PC-3 (cell line): ENCODE measurements at regions of chr1 and their contacts with region 1.

Region 1: GRCh38 chr1:2494323-2494693 is 18.2 kb downstream of the PLCH2 start:
- DNase-seq: peak; percentile 99
- ATAC-seq: peak; percentile 83
- H3K4me3 ChIP-seq: peak overlapping the region; percentile 8; the same call in 1 of the 2 replicates
- H3K27ac ChIP-seq: peak overlapping the region; percentile 66
- H3K4me1 ChIP-seq: peaks cover 22% of the 10 kb centered on the region
- H3K27me3 ChIP-seq: no peaks in the 10 kb centered on the region
- CTCF ChIP-seq: no peak

Region 2: GRCh38 chr1:2441746-2442145 is 52.6 kb before region 1 on chr1:
- CTCF ChIA-PET with region 1: no interaction called
- POLR2A ChIA-PET with region 1: interaction called, 10 read pairs
- intact Hi-C with region 1: no loop called
- DNase-seq: no peak
- ATAC-seq: peak; percentile 19
- H3K4me3 ChIP-seq: no peak overlapping the region
- H3K27ac ChIP-seq: no peak overlapping the region
- H3K4me1 ChIP-seq: no peaks in the 10 kb centered on the region
- H3K27me3 ChIP-seq: peaks cover 18% of the 10 kb centered on the region
- CTCF ChIP-seq: no peak

Region 3: GRCh38 chr1:2451744-2452143 is 42.6 kb before region 1 on chr1:
- CTCF ChIA-PET with region 1: no interaction called
- POLR2A ChIA-PET with region 1: no interaction called
- intact Hi-C with region 1: loop called (anchors 1 kb)
- DNase-seq: peak; percentile 99
- ATAC-seq: peak; percentile 83
- H3K4me3 ChIP-seq: peak overlapping the region; percentile 59
- H3K27ac ChIP-seq: peak overlapping the region; percentile 96
- H3K4me1 ChIP-seq: peaks cover 59% of the 10 kb centered on the region
- H3K27me3 ChIP-seq: no peaks in the 10 kb centered on the region
- CTCF ChIP-seq: no peak

Region 4: GRCh38 chr1:2534687-2535441 is 40.6 kb after region 1 on chr1:
- CTCF ChIA-PET with region 1: no interaction called
- POLR2A ChIA-PET with region 1: no interaction called
- intact Hi-C with region 1: no loop called
- DNase-seq: peak; percentile 97
- ATAC-seq: peak; percentile 77
- H3K4me3 ChIP-seq: peak overlapping the region; percentile 5; the same call in 1 of the 2 replicates
- H3K27ac ChIP-seq: peak overlapping the region; percentile 21
- H3K4me1 ChIP-seq: peaks cover 45% of the 10 kb centered on the region
- H3K27me3 ChIP-seq: no peaks in the 10 kb centered on the region
- CTCF ChIP-seq: no peak

Region 5: GRCh38 chr1:2545759-2546514 is 51.6 kb after region 1 on chr1:
- CTCF ChIA-PET with region 1: interaction called, 3 read pairs
- POLR2A ChIA-PET with region 1: no interaction called
- intact Hi-C with region 1: loop called (anchors 1 kb)
- DNase-seq: peak; percentile 95
- ATAC-seq: peak; percentile 64
- H3K4me3 ChIP-seq: peak overlapping the region; percentile 69
- H3K27ac ChIP-seq: peak overlapping the region; percentile 64
- H3K4me1 ChIP-seq: peaks cover 22% of the 10 kb centered on the region
- H3K27me3 ChIP-seq: no peaks in the 10 kb centered on the region
- CTCF ChIP-seq: no peak